Head of caudate nucleus (tissue), 42 donors: ENCODE measurements at regions of chr17 and their contacts with region 1.

Region 1: DNA sequence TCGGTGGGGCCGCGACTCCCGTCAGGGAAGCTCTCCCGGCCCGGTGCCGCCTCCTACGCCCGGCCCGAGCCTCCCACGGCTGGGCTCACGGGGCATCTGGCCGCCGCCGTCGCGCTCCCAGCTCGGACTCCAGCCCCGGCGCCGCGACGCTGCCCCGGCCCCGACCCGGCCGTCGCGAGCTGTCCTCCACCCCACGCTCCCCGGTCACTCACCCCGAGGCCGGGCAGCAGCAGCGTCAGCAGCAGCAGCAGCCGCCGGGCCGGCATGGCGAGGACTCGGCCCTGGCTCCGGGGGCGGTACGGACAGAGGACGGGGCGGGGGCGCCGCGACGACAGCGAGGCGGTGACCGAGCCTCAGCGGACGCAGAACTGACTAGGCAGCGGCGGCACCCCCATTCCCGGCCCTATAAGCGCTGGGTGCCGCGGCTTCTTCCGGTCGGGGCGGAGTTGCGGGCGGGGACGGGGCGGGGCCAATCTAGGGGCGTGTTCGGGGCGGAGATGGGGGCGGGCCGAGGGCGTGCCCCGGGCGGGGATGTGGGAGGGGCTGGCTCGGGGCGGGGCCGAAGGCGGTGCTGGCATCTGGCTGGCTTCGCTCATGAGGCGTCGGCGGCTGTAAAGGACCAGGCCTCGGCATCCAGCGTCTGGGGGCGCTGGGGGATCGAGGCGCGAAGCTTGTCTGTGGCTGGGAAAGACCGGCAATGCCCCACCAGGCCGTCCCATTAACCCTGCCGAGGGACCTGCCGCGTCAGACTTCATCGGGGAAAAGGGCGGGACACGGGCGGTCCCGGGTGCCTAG is at the start of gene ERN1:
- DNase-seq: peak; percentile 85 to 98 (median 95)

Region 2: GRCh38 chr17:63919311-63919723 is 210.6 kb before region 1 on chr17:
- intact Hi-C with region 1: loop called (anchors 10 kb)
- DNase-seq: peak in 39 of 42 donors; percentile 8 to 80 (median 56)

Region 3: DNA sequence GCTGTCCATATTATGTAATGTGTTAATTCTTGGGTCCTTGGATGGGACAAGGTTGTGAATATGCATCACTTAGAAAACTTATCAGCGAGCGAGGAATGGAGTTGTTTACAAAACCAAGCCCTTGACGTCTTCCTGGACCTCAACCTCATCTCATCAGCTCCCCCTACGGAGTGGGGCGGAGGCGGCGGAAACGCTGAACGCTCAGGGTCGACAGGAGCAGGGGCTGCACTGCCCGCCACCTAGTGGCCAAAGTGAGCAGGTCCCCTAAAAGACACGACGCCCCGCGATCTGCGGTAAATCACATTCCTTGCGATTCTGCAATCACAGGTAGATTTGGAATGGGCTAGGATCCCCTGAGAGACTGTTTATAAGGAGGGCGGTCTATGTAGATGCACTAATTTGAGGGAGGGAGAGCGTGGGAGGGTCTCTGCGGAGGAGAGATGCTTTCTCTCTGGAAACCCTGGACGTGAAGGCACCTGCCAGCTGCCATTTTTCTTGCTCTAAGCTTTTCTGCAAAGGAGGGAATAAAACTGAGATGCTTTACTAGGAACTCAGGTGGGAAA is 104.1 kb before region 1 on chr17:
- intact Hi-C with region 1: loop called (anchors 5 kb)
- DNase-seq: peak; percentile 26 to 80 (median 52)

Region 4: GRCh38 chr17:64091116-64091515 is 38.8 kb before region 1 on chr17:
- intact Hi-C with region 1: no loop called
- DNase-seq: no peak

Region 5: DNA sequence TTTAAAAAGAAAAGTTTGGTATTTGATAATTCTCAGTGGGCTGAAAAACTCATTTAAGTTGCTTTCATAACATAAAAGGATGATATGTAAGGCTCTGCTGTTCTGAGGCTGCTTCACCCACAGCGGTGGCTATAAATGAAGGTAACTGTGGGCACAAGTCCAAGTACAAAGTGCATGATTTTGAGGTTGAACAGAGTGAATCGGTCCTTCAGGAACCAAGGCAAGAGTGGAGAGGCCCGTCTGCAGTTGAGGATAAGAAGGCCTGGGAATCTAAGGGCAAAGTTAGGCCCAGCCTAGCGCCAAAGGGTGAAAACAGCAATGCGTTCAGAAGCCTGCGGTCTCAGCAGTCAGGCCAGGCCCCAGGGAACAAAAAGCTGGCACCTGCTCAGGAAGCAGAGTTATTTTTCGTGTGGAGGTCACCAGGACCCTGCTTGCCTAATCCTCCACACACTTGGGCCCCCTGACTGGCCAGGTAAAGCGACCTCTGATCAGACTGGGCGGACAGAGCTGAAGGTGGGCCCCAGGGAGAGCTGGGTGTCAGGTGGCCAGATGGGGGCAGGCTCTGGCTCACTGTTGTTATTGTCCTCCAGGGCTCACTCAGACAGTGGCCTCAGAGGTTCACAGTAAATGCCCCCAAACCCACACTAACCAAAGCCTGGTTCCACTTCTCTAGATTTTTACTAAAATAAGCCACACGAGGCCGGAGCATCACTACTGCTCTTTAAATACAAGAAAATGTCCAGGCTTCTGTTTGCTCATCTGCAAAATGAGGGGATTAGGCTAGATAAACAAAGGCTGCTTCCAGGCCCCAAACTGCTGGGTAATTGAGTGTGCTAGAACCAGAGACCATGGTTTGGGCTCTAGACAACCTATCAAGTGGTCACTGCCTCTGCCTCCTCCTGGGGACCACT is 86.6 kb after region 1 on chr17:
- intact Hi-C with region 1: no loop called
- DNase-seq: peak in 1 of 42 donors; percentile 23